ENCODE measurements at regions of chr9 and their contacts with region 1.

Region 1: GRCh38 chr9:129110740-129111527 is at the starts of genes CRAT and PTPA:
- DNase-seq: peak; percentile 92
- H3K4me3 Mint-ChIP-seq: peak within 1 kb of the TSS; percentile 89
- H3K27ac Mint-ChIP-seq: peak within 1 kb of the TSS; percentile 94
- H3K4me1 Mint-ChIP-seq: peaks cover 18% of the 10 kb centered on the region
- H3K27me3 Mint-ChIP-seq: no peaks in the 10 kb centered on the region
- CTCF ChIP-seq: no peak
- total RNA-seq, gene CRAT: 14.5 and 17.0 TPM in 2 replicates
- total RNA-seq, gene PTPA: 90.8 and 91.8 TPM in 2 replicates

Region 2: GRCh38 chr9:128863647-128864046 is 247.3 kb before region 1 on chr9:
- CTCF ChIA-PET with region 1: no interaction called
- POLR2A ChIA-PET with region 1: no interaction called
- intact Hi-C with region 1: no loop called
- DNase-seq: peak; percentile 77
- H3K4me3 Mint-ChIP-seq: no peak overlapping the region
- H3K27ac Mint-ChIP-seq: no peak overlapping the region
- H3K4me1 Mint-ChIP-seq: peaks cover 14% of the 10 kb centered on the region
- H3K27me3 Mint-ChIP-seq: no peaks in the 10 kb centered on the region
- CTCF ChIP-seq: peak; percentile 95

Region 3: GRCh38 chr9:129028192-129028957 is 82.6 kb before region 1 on chr9 and contains the start of gene SH3GLB2:
- CTCF ChIA-PET with region 1: no interaction called
- POLR2A ChIA-PET with region 1: no interaction called
- intact Hi-C with region 1: no loop called
- DNase-seq: peak; percentile 88
- H3K4me3 Mint-ChIP-seq: peak within 1 kb of the TSS; percentile 78
- H3K27ac Mint-ChIP-seq: peak within 1 kb of the TSS; percentile 79
- H3K4me1 Mint-ChIP-seq: peaks cover 12% of the 10 kb centered on the region
- H3K27me3 Mint-ChIP-seq: no peaks in the 10 kb centered on the region
- CTCF ChIP-seq: peak; percentile 84
- total RNA-seq, gene SH3GLB2: 51.7 and 58.3 TPM in 2 replicates

Region 4: DNA sequence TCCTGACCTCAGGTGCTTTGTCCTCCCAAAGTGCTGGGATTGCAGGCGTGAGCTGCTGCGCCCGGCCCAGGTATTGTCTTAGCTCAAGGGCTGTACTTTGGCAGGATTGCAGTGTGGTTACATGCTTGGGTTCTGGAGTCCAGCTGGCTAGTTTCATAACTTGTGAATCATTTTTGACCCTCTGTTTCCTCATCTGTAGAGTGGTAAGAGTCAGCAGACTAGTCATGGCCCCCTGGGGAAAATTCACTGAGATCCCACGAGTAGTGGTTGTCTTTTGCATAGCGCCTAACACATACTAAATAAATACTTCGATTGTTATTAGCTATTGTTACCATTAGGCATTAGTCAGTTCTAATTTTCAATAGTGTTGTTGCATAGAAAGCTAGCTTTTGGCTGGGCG is 14.5 kb after region 1 on chr9:
- CTCF ChIA-PET with region 1: interaction called, 6 read pairs
- POLR2A ChIA-PET with region 1: interaction called, 20 read pairs
- intact Hi-C with region 1: no loop called
- DNase-seq: peak; percentile 97
- H3K4me3 Mint-ChIP-seq: no peak overlapping the region
- H3K27ac Mint-ChIP-seq: peak overlapping the region; percentile 16
- H3K4me1 Mint-ChIP-seq: peaks cover 10% of the 10 kb centered on the region
- H3K27me3 Mint-ChIP-seq: no peaks in the 10 kb centered on the region
- CTCF ChIP-seq: no peak

Region 5: DNA sequence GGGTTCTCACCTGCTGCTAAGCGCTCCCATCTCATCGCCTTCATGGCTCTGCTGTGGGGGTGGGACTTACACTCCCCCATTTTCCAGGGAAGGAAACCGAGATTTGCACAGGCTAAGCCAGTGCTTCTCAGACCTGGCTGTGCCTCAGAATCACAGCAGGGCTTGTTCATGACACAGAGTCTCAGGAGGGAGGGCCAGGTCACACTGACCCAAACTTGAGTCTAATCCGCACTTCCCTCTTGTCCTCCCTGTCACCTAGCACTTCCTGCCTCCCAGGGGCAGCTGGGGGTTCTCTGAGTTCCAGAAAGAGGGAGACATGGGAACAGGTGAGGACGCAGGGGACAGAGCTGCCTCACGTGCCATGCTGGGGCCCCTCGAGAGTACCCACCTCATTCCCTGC is 82.7 kb after region 1 on chr9:
- CTCF ChIA-PET with region 1: no interaction called
- POLR2A ChIA-PET with region 1: no interaction called
- intact Hi-C with region 1: no loop called
- DNase-seq: no peak
- H3K4me3 Mint-ChIP-seq: no peak overlapping the region
- H3K27ac Mint-ChIP-seq: no peak overlapping the region
- H3K4me1 Mint-ChIP-seq: no peaks in the 10 kb centered on the region
- H3K27me3 Mint-ChIP-seq: peaks cover 13% of the 10 kb centered on the region
- CTCF ChIP-seq: no peak

Measured in MCF 10A (cell line).